Activated CD4-positive, alpha-beta T cell treated with anti-CD3 and anti-CD28 coated beads for 36 hours (primary cell): ENCODE measurements at regions of chr21 and their contacts with region 1.

Region 1: GRCh38 chr21:33976082-33977016 is 60.7 kb upstream of the ATP5PO start:
- DNase-seq: peak; percentile 80
- ATAC-seq: peak; percentile 57
- H3K4me3 Mint-ChIP-seq: peak overlapping the region; percentile 68
- H3K27ac Mint-ChIP-seq: peak overlapping the region; percentile 96
- H3K4me1 Mint-ChIP-seq: peaks cover 73% of the 10 kb centered on the region
- H3K27me3 Mint-ChIP-seq: no peaks in the 10 kb centered on the region

Region 2: GRCh38 chr21:33491373-33492102 is 484.8 kb before region 1 on chr21 and contains the start of gene DNAJC28:
- CTCF ChIA-PET with region 1: no interaction called
- POLR2A ChIA-PET with region 1: no interaction called
- intact Hi-C with region 1: no loop called
- DNase-seq: peak; percentile 95
- ATAC-seq: peak; percentile 99
- H3K4me3 Mint-ChIP-seq: peak within 1 kb of the TSS; percentile 87
- H3K27ac Mint-ChIP-seq: peak within 1 kb of the TSS; percentile 91
- H3K4me1 Mint-ChIP-seq: peaks cover 9% of the 10 kb centered on the region
- H3K27me3 Mint-ChIP-seq: no peaks in the 10 kb centered on the region
- total RNA-seq, gene DNAJC28: 0.37 to 0.43 TPM

Region 3: GRCh38 chr21:33947451-33948095 is 28.8 kb before region 1 on chr21:
- CTCF ChIA-PET with region 1: interaction called, 24 read pairs
- POLR2A ChIA-PET with region 1: interaction called, 104 read pairs
- intact Hi-C with region 1: loop called (anchors 1 kb)
- DNase-seq: peak; percentile 92
- ATAC-seq: peak; percentile 63
- H3K4me3 Mint-ChIP-seq: peak overlapping the region; percentile 70
- H3K27ac Mint-ChIP-seq: peak overlapping the region; percentile 100
- H3K4me1 Mint-ChIP-seq: peaks cover 79% of the 10 kb centered on the region
- H3K27me3 Mint-ChIP-seq: no peaks in the 10 kb centered on the region

Region 4: DNA sequence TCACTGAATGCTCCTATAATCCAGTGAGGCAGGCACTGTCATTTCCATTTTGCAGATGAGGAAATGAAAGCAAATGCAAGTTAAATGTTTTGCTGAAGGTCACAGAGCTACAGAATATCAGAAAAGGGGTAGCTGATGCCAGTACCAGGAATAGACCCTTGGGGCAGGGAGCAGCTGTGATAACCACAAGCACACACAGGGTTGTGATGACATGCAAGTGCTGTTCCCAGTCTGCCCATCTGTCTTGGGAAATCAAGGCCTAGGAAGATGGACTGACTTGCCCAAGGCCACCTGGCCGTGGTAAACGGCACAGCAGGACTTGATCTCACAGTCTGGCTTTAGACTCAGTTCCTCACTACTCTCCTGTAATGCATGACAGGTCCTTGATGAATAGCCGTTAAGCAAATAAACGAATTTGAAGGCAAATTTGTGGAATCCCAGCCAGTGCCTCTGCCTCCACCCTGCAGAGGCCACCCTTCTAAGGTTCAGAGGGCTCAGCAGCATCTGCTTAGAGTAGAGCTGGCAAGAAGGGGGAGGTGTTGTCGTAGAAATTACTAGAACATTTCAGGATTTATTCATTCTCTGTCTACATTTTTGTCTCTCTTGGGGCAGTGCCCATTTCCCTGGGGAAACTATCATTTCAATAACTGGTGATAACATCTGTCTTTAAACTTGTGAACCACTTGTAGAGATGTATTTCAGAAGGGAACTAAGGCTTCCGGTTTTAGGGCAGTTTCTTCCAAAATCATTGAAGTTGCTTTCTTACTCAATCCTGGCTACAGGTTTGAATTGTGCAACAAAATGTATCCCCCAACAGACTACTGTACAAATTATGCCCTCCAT is 43.9 kb after region 1 on chr21:
- CTCF ChIA-PET with region 1: no interaction called
- POLR2A ChIA-PET with region 1: no interaction called
- intact Hi-C with region 1: loop called (anchors 1 to 5 kb)
- DNase-seq: no peak
- ATAC-seq: peak; percentile 30
- H3K4me3 Mint-ChIP-seq: no peak overlapping the region
- H3K27ac Mint-ChIP-seq: no peak overlapping the region
- H3K4me1 Mint-ChIP-seq: peaks cover 11% of the 10 kb centered on the region
- H3K27me3 Mint-ChIP-seq: no peaks in the 10 kb centered on the region

Region 5: DNA sequence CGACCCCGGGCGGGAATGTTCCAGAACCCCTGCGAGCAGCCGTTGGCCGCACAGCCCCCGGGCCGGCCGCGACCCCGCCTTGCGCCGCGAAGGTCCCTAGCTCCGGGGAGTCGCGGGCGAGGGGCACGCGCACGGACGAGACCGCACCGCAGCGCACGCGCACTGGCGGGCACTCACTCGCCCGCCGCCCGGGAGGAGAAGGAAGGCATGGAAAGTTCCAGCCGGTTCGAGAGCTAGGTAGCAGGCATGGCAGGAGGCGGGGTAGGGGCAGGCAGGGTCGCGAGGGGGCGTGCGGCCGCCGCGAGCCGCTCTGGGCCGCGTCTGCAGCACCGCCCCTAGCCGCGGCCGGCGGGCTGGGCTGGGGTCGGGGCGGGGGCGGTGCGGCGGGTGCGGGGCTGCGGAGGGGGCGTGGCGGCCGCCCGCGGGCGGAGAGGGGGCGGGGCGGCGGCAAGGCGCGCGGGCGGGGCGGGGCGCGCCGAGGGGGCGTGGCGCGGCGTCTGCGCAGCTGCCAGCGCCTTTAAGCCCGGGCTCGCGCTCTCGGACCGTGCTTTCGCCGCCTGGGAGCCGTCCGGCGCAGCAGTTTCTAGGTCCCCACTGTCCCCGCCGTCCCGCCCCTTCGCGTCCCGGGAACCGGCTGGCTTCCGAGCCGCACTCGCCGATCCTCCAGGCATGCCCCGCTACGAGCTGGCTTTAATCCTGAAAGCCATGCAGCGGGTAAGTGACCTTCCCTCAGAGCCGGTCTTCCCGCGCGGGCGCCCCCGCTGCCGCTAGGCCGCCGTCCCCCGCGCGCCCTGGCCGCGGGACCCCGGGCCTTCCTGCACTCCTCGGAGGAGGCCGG is 96.9 kb after region 1 on chr21 and contains the starts of genes MRPS6 and SLC5A3:
- CTCF ChIA-PET with region 1: interaction called, 6 read pairs
- POLR2A ChIA-PET with region 1: interaction called, 6 read pairs
- intact Hi-C with region 1: loop called (anchors 1 to 2 kb)
- DNase-seq: peak; percentile 81
- ATAC-seq: peak; percentile 66
- H3K4me3 Mint-ChIP-seq: peak within 1 kb of the TSS; percentile 96
- H3K27ac Mint-ChIP-seq: peak within 1 kb of the TSS; percentile 92
- H3K4me1 Mint-ChIP-seq: peaks cover 38% of the 10 kb centered on the region
- H3K27me3 Mint-ChIP-seq: no peaks in the 10 kb centered on the region
- total RNA-seq, gene MRPS6: 102 to 117 TPM
- total RNA-seq, gene SLC5A3: 18.2 to 22.9 TPM

Region 6: DNA sequence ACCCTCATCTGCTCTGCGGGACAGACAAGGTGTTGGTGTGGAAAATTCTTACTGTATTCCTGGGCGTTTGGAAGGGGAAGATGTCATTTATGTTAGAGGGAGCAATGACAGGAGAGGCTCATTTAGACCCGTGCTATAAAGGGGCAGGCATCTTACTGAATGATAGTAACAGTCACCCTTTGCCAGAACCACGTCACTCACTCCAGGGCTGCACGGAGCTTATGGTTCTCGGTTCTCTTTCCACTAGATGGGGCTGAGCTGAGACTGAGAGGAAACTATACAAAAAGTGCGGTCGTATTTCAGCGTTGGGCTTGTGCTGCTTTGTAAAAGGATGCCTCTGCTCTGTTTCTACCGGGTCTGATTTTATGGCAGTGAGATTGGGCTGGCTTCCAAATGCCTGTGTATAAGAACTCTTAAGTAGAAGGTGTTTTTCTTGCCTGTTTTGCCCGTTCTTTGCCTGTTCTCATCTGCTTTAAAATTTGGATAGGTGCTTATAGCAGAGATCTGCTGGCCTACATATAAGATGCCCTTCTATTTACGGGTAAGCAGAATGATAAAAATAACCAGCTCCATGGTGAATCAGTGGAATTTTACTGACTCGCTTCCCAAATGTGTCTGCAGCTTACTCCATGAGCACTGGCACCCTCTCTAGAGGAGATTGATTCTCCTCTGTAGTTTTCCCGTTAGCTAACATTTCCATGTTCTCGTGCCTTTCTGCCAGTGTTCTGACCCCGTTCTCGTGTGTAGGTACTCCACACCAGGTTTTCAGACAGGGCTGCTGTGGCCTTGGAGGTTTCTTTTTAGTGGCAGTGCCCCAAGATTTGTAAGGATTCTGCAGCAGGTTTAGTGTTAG is 152.9 kb after region 1 on chr21:
- CTCF ChIA-PET with region 1: interaction called, 3 read pairs
- POLR2A ChIA-PET with region 1: no interaction called
- intact Hi-C with region 1: loop called in 1 of 2 experiments (anchors 2 kb)
- DNase-seq: peak; percentile 87
- ATAC-seq: peak; percentile 94
- H3K4me3 Mint-ChIP-seq: peak overlapping the region; percentile 60
- H3K27ac Mint-ChIP-seq: peak overlapping the region; percentile 94
- H3K4me1 Mint-ChIP-seq: peaks cover 89% of the 10 kb centered on the region
- H3K27me3 Mint-ChIP-seq: no peaks in the 10 kb centered on the region

Region 7: DNA sequence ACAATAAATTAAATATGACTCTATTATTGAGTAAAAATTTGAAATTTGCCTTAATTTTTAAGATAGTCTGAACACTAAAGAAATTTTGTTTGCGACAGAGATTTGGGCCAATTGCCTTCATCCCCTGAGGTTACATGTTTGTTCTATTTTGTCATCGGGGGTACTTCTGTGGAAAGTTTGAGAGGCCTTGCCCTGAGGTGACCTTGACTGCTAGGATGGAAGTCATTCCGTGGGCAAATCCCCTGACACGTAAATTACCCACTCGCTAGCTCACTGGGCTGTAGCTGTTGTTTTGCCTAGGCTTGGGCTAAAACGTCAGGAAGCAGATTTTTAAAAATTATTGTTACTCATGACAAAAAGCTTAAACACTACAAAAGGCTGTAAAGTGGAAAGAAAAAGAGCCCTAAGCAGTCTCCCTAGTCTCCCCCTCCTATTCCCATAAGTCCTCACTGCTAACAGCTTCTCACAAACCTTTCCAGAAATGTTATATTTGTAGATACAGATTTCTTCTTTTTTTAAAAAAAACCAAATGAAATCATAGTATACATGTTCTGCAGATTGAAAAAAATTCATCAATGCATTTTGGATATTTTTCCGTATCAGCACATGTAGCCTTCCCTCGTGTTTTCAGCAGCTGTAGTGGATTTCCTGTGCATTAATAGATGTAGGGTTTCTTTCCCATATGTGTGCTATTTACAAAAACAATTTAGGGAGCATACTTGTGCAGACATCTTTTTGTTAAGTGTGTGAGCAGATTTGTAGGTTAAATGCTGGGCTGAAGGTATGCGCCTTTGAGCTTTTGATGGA is 239.8 kb after region 1 on chr21:
- CTCF ChIA-PET with region 1: no interaction called
- POLR2A ChIA-PET with region 1: no interaction called
- intact Hi-C with region 1: no loop called
- DNase-seq: no peak
- ATAC-seq: no peak
- H3K4me3 Mint-ChIP-seq: no peak overlapping the region
- H3K27ac Mint-ChIP-seq: no peak overlapping the region
- H3K4me1 Mint-ChIP-seq: no peaks in the 10 kb centered on the region
- H3K27me3 Mint-ChIP-seq: no peaks in the 10 kb centered on the region

Region 8: GRCh38 chr21:34614633-34615486 is 638.5 kb after region 1 on chr21 and contains the start of gene RCAN1:
- CTCF ChIA-PET with region 1: no interaction called
- POLR2A ChIA-PET with region 1: no interaction called
- intact Hi-C with region 1: loop called in 1 of 2 experiments (anchors 10 kb)
- DNase-seq: peak; percentile 92
- ATAC-seq: peak; percentile 98
- H3K4me3 Mint-ChIP-seq: peak within 1 kb of the TSS; percentile 75
- H3K27ac Mint-ChIP-seq: peak within 1 kb of the TSS; percentile 68
- H3K4me1 Mint-ChIP-seq: peaks cover 18% of the 10 kb centered on the region
- H3K27me3 Mint-ChIP-seq: no peaks in the 10 kb centered on the region
- total RNA-seq, gene RCAN1: 9.9 to 10.0 TPM